ENCODE measurements at regions of chr5 and their contacts with region 1.

Region 1: GRCh38 chr5:96614110-96614691 is 48.0 kb upstream of the CAST start:
- DNase-seq: peak; percentile 71
- H3K4me3 ChIP-seq: no peak overlapping the region
- H3K27ac ChIP-seq: no peak overlapping the region
- H3K4me1 ChIP-seq: no peaks in the 10 kb centered on the region
- CTCF ChIP-seq: peak; percentile 83

Region 2: DNA sequence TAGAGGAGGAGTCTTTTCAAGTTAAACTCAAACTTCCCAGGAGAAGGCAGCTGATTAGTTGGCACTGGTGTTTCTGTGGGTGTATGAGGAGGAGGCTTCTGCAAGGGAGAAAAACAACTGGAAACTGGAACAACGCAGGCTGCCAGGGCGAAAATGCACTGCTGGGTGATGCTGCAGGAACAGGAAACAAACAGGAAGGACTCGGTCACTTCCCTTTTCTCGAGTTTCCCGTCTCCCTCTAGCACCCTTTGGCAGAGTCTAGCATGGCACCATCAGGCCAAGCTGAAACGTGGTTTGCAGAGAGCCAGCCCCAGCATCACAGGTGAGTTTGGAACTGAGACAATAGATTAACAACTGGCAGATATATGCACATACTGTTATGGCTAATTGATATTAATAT is 29.5 kb before region 1 on chr5:
- CTCF ChIA-PET with region 1: no interaction called
- POLR2A ChIA-PET with region 1: no interaction called
- intact Hi-C with region 1: no loop called
- DNase-seq: peak; percentile 7
- H3K4me3 ChIP-seq: no peak overlapping the region
- H3K27ac ChIP-seq: no peak overlapping the region
- H3K4me1 ChIP-seq: no peaks in the 10 kb centered on the region
- CTCF ChIP-seq: no peak

Region 3: DNA sequence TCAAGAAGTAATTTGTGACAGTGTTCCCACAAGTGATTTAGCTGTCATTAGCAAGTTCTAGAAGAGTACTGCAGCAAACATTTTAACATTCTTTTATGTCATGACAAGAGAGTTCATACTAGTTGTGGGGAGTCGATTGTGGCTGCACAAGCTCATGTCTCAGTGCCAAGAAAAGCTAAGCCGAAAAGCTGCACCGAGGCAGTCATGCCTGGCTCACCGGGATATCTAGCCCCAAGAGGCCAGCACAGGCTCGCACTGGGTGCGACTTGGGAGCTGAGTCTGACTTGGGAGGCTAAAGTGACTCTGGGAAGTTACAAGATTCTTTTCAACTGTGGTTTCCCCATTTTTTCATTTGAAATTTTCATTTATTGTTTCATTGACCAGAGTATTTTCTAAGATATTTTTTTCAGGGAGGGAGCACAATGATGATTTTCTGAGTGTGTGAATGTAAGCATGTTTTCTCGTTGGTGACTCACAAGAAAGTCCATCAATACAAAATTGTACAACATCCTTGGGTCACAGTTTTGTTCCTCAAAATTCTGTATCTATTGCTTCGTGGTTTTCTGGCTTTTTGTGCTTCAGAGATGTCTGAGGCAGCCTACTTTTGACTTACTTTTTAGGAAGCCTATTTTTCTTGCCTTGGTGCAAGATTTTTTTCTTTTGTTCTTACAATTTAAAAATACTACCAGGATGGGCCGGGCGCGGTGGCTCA is 66.7 kb after region 1 on chr5:
- CTCF ChIA-PET with region 1: no interaction called
- POLR2A ChIA-PET with region 1: no interaction called
- intact Hi-C with region 1: no loop called
- DNase-seq: no peak
- H3K4me3 ChIP-seq: no peak overlapping the region
- H3K27ac ChIP-seq: no peak overlapping the region
- H3K4me1 ChIP-seq: no peaks in the 10 kb centered on the region
- CTCF ChIP-seq: no peak

Region 4: GRCh38 chr5:96729156-96729555 is 115.0 kb after region 1 on chr5:
- CTCF ChIA-PET with region 1: no interaction called
- POLR2A ChIA-PET with region 1: no interaction called
- intact Hi-C with region 1: loop called (anchors 5 kb)
- DNase-seq: no peak
- H3K4me3 ChIP-seq: no peak overlapping the region
- H3K27ac ChIP-seq: no peak overlapping the region
- H3K4me1 ChIP-seq: peaks cover 4% of the 10 kb centered on the region
- CTCF ChIP-seq: peak; percentile 72

Region 5: GRCh38 chr5:96752341-96753016 is 138.3 kb after region 1 on chr5:
- CTCF ChIA-PET with region 1: no interaction called
- POLR2A ChIA-PET with region 1: interaction called, 3 read pairs
- intact Hi-C with region 1: loop called (anchors 1 kb)
- DNase-seq: peak; percentile 82
- H3K4me3 ChIP-seq: no peak overlapping the region
- H3K27ac ChIP-seq: no peak overlapping the region
- H3K4me1 ChIP-seq: no peaks in the 10 kb centered on the region
- CTCF ChIP-seq: peak; percentile 91

Region 6: GRCh38 chr5:97019435-97020117 is 405.4 kb after region 1 on chr5:
- CTCF ChIA-PET with region 1: no interaction called
- POLR2A ChIA-PET with region 1: no interaction called
- intact Hi-C with region 1: loop called (anchors 10 kb)
- DNase-seq: no peak
- H3K4me3 ChIP-seq: no peak overlapping the region
- H3K27ac ChIP-seq: no peak overlapping the region
- H3K4me1 ChIP-seq: no peaks in the 10 kb centered on the region
- CTCF ChIP-seq: no peak

Region 7: DNA sequence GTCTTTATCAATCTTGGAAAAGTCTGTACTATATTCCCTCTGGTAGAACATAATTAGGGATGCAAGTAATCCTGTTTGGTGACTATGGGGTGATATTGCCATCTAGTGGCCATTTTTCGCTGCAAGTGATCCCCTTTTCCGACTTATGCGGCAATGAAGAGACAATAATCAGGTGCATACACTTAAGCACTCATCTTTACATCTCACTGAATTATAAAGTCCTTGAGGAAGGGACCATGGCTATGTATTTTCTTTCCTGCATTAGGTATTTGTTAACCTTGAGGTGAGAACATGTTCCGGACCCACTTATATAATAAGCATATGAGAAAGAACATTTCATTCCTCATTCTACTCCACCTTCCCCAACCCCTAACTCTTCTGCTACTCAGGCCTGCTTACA is 547.8 kb after region 1 on chr5:
- CTCF ChIA-PET with region 1: no interaction called
- POLR2A ChIA-PET with region 1: interaction called, 3 read pairs
- intact Hi-C with region 1: loop called (anchors 1 kb)
- DNase-seq: peak; percentile 74
- H3K4me3 ChIP-seq: no peak overlapping the region
- H3K27ac ChIP-seq: no peak overlapping the region
- H3K4me1 ChIP-seq: peaks cover under 1% of the 10 kb centered on the region
- CTCF ChIP-seq: peak; percentile 100